Aorta (tissue), 5 donors: ENCODE measurements at regions of chr7 and their contacts with region 1.

Region 1: DNA sequence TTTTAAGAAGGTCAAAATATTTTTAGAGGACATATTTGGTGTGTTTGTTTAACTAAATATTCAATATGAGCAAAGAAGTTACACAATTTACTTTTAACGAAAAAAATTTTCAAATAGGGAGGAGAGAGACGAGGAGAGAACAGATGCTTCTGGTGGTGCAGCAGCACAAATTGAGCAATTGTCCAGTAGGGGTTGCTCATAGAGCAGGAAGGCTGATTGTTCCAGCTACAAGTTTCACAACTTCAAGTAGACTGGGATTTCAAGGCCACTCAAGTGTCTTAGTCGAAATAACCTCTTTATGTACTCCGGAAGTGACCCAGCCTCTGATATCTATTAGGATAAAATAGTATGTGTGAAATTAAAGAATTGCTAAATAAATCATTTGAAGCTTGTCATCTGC is 197.9 kb downstream of the HDAC9 start:
- DNase-seq: no peak
- ATAC-seq: peak; percentile 87
- H3K4me3 ChIP-seq: no peak overlapping the region
- H3K27ac ChIP-seq: no peak overlapping the region
- H3K4me1 ChIP-seq: no peaks in the 10 kb centered on the region
- H3K27me3 ChIP-seq: no peaks in the 10 kb centered on the region

Region 2: GRCh38 chr7:19051767-19052375 is 358.5 kb after region 1 on chr7:
- intact Hi-C with region 1: loop called in 1 of 2 experiments (anchors 10 kb)
- DNase-seq: no peak
- ATAC-seq: no peak
- H3K4me3 ChIP-seq: no peak overlapping the region
- H3K27ac ChIP-seq: no peak overlapping the region
- H3K4me1 ChIP-seq: no peaks in the 10 kb centered on the region
- H3K27me3 ChIP-seq: no peaks in the 10 kb centered on the region